ENCODE measurements at regions of chr11 and their contacts with region 1.

Region 1: DNA sequence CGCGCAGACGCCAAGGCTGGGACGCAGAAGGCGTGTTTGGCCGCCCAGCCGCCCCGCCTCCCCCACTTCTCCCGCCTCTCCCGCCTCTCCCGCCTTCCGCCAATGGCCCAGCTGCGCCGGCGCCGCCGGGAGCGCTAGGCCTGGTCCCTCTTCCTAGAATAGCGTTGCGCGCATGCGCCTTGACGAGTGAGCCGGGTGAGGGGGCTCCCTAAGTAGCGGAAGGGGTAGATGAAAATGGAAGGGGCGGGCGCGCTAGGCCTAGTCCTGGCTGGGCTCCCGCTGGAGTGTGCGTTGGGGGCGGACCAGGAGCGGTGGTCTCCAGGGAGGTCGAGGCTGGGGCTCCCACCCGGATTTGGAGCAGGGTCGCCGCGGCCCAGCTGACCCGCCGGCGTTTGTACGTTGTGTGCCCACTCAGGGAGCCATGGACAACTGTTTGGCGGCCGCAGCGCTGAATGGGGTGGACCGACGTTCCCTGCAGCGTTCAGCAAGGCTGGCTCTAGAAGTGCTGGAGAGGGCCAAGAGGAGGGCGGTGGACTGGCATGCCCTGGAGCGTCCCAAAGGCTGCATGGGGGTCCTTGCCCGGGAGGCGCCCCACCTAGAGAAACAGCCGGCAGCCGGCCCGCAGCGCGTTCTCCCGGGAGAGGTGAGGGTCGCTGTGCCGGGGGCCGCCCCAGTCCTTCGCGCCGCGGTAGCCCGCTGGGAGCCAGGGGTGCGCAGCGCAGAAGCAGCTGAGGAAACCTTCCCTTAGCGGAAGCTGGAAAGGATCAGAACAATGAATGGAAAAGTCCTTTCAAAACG is at the start of gene AKIP1:
- DNase-seq: peak; percentile 96 to 98
- ATAC-seq: peak; percentile 96 to 99 (median 97)
- H3K4me3 ChIP-seq: peak within 1 kb of the TSS; percentile 59 to 98 (median 81)
- H3K27ac ChIP-seq: peak within 1 kb of the TSS; percentile 78 to 99 (median 94)
- H3K4me1 ChIP-seq: peaks cover 0 to 63% (median 30%) of the 10 kb centered on the region in 9 donors
- H3K27me3 ChIP-seq: no peaks in the 10 kb centered on the region
- CTCF ChIP-seq: peak in 1 of 9 donors; percentile 7
- total RNA-seq, gene AKIP1: 21.6 to 29.3 (median 25.5) TPM

Region 2: GRCh38 chr11:8682303-8683114 is 228.7 kb before region 1 on chr11 and contains the starts of genes RPL27A and TRIM66:
- intact Hi-C with region 1: loop called in 4 of 10 experiments (anchors 5 to 10 kb)
- DNase-seq: peak; percentile 99
- ATAC-seq: peak; percentile 97 to 100 (median 99)
- H3K4me3 ChIP-seq: peak within 1 kb of the TSS; percentile 69 to 99 (median 90)
- H3K27ac ChIP-seq: peak within 1 kb of the TSS; percentile 81 to 97 (median 96)
- H3K4me1 ChIP-seq: peaks cover 6 to 40% (median 30%) of the 10 kb centered on the region in 9 donors
- H3K27me3 ChIP-seq: no peaks in the 10 kb centered on the region
- CTCF ChIP-seq: peak in 4 of 9 donors; percentile 7 to 39 (median 20)
- total RNA-seq, gene RPL27A: 317 to 560 (median 381) TPM
- total RNA-seq, gene TRIM66: 1.8 to 7.4 (median 2.8) TPM

Region 3: GRCh38 chr11:8826139-8826786 is 85.0 kb before region 1 on chr11:
- intact Hi-C with region 1: loop called in 2 of 10 experiments (anchors 10 kb)
- DNase-seq: peak in 1 of 2 donors; percentile 23
- ATAC-seq: peak in 6 of 8 donors; percentile 29 to 71 (median 61)
- H3K4me3 ChIP-seq: no peak overlapping the region
- H3K27ac ChIP-seq: peak overlapping the region in 6 of 10 donors; percentile 12 to 53 (median 33)
- H3K4me1 ChIP-seq: peaks cover 0 to 23% (median 7%) of the 10 kb centered on the region in 9 donors
- H3K27me3 ChIP-seq: no peaks in the 10 kb centered on the region
- CTCF ChIP-seq: no peak

Region 4: DNA sequence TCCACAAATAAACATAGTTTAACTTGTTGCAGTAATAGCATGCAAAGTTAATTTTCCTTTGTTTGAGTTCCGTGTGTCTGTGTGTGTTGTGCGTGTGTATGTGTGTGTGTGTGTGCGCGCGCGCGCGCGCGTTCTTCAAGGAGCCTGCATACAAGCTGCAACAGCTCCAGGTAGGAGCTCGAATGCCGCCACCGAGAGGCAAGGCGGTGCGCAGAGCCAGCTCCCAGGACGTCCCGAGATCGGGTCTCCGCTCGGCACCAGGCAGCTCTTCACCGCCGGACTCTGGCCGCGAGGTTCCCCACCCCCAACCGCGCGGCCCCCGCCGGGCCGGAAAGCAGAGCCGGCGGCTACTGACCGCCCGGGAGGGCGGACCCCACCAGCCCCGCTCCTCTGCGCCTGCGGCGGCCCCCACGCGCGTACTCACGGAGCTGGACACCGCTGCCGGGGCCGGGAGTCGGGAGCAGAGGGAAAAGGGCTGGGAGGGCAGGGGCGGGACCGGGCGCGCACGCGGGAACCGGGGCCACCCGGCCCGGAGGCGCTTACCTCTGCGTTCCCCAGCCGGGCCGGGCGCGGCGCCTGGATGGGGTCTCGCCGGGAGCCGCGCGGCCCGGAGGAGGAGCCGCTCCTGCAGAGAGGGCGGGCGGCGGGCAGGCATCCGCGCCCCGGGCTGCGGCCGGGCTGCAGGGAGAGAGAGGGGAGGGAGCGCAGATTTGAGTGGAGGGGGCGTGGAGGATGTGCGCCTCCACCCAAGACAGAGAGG is 40.6 kb before region 1 on chr11:
- intact Hi-C with region 1: loop called in 4 of 10 experiments (anchors 5 kb)
- DNase-seq: peak; percentile 59
- ATAC-seq: peak; percentile 80 to 90 (median 82)
- H3K4me3 ChIP-seq: peak overlapping the region; percentile 59 to 96 (median 86)
- H3K27ac ChIP-seq: peak overlapping the region; percentile 63 to 93 (median 86)
- H3K4me1 ChIP-seq: peaks cover 0 to 73% (median 32%) of the 10 kb centered on the region in 9 donors
- H3K27me3 ChIP-seq: peaks cover 0 to 38% (median 0%) of the 10 kb centered on the region in 7 donors
- CTCF ChIP-seq: no peak

Region 5: DNA sequence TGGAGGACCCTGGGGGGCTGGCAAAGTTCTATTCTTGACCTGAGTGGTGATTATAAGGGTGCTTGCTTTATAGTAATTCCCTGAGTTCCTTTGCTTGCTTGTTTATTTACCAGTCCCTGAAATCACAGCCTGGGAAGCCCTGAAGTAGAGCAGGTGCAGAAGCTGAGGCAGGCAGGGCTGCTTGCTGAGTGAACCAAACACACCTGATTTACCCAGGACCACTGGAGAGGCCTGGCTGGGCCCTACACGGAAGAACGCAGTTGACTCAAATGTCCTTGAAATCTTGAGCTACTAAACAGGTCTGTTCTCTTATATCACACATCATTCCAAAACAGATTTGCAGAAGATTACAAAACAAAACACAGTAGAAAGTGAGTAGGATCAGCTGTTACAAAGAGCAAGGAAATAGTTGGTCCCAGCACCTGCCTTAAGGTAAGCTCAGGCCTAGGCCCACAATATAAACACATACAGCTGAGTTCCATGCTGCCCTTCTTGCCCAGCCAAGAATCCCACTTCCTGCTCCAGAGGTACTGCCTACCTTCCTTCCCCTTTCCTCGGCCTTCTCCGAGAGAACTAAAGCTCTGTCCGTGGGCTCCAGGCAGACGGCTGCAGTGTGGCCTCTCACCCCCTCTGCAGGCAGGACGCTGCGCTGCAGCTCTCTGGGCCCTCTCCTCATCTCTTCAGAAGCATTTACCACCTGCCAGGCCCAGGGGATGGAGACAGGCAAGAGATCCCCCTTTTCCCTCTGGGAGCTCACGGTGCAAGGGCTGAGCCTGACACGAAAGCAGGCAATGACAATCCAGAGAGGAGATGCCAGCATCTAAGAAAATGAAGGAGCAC is 226.3 kb after region 1 on chr11:
- intact Hi-C with region 1: loop called in 5 of 10 experiments (anchors 5 to 10 kb)
- DNase-seq: peak; percentile 70 to 71
- ATAC-seq: peak; percentile 82 to 94 (median 90)
- H3K4me3 ChIP-seq: no peak overlapping the region
- H3K27ac ChIP-seq: peak overlapping the region in 3 of 10 donors; percentile 13 to 28 (median 17)
- H3K4me1 ChIP-seq: peaks cover 0 to 35% (median 17%) of the 10 kb centered on the region in 9 donors
- H3K27me3 ChIP-seq: no peaks in the 10 kb centered on the region
- CTCF ChIP-seq: peak; percentile 85 to 97 (median 94)